Right ventricle myocardium inferior (tissue), 1 donor: ENCODE measurements at regions of chr16 and their contacts with region 1.

Region 1: DNA sequence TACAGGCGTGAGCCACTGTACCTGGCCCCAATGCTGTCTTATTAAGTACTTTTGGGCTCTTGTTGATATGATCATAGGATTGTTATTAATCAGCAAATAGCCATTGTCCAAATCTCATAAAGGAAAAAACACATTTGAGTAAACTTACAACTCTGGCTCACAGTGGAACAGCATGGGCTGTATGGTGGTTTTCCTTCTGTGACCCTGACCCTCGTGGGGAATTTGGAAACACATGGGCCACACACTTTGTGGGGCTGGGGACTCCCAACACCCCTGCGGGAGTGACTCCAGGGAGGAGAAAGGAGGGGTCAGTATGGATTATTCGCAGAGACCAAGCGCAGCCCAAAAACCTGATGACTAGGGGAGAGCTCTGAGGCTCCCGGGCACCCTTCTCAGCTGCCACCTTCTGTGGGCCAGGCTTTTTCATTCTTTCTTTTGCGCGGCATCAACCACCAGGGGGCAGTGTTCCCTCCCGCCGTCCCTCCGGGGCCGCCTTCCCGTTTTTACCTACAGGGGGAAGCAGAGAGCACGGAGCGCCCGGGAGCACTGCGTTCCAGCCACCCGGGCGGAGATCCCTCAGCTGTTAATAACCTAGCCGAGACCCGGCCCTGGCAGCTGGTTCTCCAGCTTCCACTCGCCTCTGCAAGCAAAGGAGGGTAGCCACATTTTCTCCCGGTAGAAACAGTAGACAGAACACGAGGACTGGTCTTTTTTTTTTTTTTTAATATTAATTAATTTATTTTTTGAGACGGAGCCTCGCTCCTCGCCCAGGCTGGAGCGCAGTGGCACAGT is 9.7 kb downstream of the TSNAXIP1 start:
- DNase-seq: peak; percentile 95
- ATAC-seq: peak; percentile 93

Region 2: GRCh38 chr16:67928561-67929364 is 112.3 kb after region 1 on chr16:
- intact Hi-C with region 1: loop called (anchors 2 kb)
- DNase-seq: peak; percentile 80
- ATAC-seq: peak; percentile 75